ENCODE measurements at regions of chr2 and their contacts with region 1.

Region 1: DNA sequence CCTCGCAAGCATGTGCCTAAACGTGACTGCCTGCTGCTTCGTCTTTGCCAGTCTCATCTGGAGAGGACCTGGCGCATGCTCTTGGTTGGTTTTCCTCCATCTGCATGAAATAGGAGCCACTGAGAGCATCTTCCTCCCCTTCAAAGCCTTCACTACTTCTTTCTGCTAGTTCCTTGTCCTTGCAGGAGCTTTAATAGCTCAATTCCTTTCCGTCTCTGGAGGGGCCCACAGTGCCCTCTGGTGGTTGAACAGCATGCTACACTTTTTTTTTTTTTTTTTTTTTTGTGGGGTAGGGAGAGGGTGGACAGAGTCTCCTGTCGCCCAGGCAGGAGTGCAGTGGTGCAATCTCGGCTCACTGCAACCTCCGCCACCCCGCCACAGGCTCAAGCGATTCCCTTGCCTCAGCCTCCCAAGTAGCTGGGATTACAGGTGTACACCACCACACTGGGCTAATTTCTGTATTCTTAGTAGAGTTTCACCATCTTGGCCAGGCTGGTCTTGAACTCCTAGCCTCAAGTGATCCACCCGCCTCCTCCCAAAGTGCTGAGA is 59.6 kb downstream of the SP110 start:
- DNase-seq: peak; percentile 71
- H3K4me3 ChIP-seq: no peak overlapping the region
- H3K27ac ChIP-seq: no peak overlapping the region
- H3K4me1 ChIP-seq: no peaks in the 10 kb centered on the region
- H3K27me3 ChIP-seq: peaks cover 0 to 7% of the 10 kb centered on the region in 2 experiments
- CTCF ChIP-seq: peak; percentile 65 to 76
- POLR2A ChIP-seq: no peak

Region 2: GRCh38 chr2:229780856-229781773 is 379.1 kb before region 1 on chr2:
- CTCF ChIA-PET with region 1: interaction called, 29 read pairs
- POLR2A ChIA-PET with region 1: no interaction called
- dilution Hi-C with region 1: no loop called
- intact Hi-C with region 1: loop called (anchors 5 kb)
- DNase-seq: peak; percentile 76
- H3K4me3 ChIP-seq: no peak overlapping the region
- H3K27ac ChIP-seq: peak overlapping the region; percentile 31
- H3K4me1 ChIP-seq: peaks cover 13% of the 10 kb centered on the region
- H3K27me3 ChIP-seq: no peaks in the 10 kb centered on the region
- CTCF ChIP-seq: peak; percentile 74 to 75
- POLR2A ChIP-seq: no peak

Region 3: GRCh38 chr2:229861431-229861830 is 298.8 kb before region 1 on chr2:
- CTCF ChIA-PET with region 1: no interaction called
- POLR2A ChIA-PET with region 1: no interaction called
- dilution Hi-C with region 1: no loop called
- intact Hi-C with region 1: no loop called
- DNase-seq: no peak
- H3K4me3 ChIP-seq: no peak overlapping the region
- H3K27ac ChIP-seq: no peak overlapping the region
- H3K4me1 ChIP-seq: no peaks in the 10 kb centered on the region
- H3K27me3 ChIP-seq: no peaks in the 10 kb centered on the region
- CTCF ChIP-seq: no peak
- POLR2A ChIP-seq: no peak

Region 4: DNA sequence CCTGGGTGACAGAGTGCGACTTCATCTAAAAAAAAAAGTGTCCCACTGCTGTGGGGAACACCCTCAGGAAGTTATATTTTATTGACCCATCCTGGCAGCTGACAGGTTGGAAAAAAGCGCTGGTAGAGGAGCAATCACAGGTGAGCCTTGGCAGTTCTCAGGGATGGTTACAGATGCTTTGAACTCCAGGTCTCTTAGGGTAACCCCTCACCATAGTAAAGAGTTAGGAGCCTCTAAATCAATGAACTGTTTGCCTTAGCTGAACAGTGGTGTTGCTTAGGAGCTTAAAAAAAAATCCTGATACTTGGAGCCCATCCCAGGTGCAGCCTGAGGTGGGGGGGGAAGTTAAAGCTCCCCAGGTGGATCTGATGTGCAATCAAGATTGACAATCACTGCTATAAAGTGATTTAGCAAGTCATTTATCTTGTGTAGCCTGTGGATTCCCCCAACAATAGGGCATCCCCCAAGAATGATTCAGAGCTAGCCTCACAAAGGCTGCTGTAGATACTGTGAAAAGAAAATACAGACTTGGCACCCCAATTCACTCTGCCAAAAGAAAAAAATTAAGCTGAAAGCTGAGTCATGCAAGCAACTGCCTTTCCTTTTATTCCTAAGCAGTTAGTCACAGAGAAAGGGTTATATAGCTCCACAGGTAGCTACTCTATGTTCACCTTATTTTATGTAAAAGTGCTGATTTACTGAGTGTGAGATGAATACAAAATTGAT is 106.3 kb before region 1 on chr2:
- CTCF ChIA-PET with region 1: interaction called, 14 read pairs
- POLR2A ChIA-PET with region 1: no interaction called
- dilution Hi-C with region 1: no loop called
- intact Hi-C with region 1: no loop called
- DNase-seq: no peak
- H3K4me3 ChIP-seq: no peak overlapping the region
- H3K27ac ChIP-seq: no peak overlapping the region
- H3K4me1 ChIP-seq: no peaks in the 10 kb centered on the region
- H3K27me3 ChIP-seq: no peaks in the 10 kb centered on the region
- CTCF ChIP-seq: no peak
- POLR2A ChIP-seq: no peak

Region 5: GRCh38 chr2:230075988-230076631 is 84.1 kb before region 1 on chr2:
- CTCF ChIA-PET with region 1: interaction called, 11 read pairs
- POLR2A ChIA-PET with region 1: no interaction called
- dilution Hi-C with region 1: no loop called
- intact Hi-C with region 1: no loop called
- DNase-seq: peak; percentile 42
- H3K4me3 ChIP-seq: no peak overlapping the region
- H3K27ac ChIP-seq: no peak overlapping the region
- H3K4me1 ChIP-seq: peaks cover 5% of the 10 kb centered on the region
- H3K27me3 ChIP-seq: peaks cover 0 to 5% of the 10 kb centered on the region in 2 experiments
- CTCF ChIP-seq: no peak
- POLR2A ChIP-seq: no peak

Region 6: DNA sequence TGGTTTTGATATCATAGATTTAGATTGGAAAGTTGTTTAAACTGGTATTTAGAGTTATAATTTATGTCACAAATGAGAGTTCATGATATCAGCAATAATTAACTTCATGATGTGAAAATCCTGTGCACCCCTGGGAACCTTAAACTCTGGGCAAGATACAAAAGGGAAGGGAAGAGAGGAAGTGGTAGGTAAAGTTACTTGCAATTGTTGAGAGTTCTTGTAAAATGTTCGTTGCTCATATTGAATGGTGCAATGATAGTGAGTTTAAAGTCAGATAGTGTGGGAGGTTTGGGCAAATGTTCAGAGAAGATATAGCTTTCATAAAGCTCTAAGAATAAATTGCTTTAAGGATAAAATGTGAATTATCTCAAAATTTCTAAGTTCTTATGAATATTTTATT is 15.8 kb before region 1 on chr2:
- CTCF ChIA-PET with region 1: interaction called, 39 read pairs
- POLR2A ChIA-PET with region 1: no interaction called
- dilution Hi-C with region 1: no loop called
- intact Hi-C with region 1: no loop called
- DNase-seq: no peak
- H3K4me3 ChIP-seq: no peak overlapping the region
- H3K27ac ChIP-seq: no peak overlapping the region
- H3K4me1 ChIP-seq: no peaks in the 10 kb centered on the region
- H3K27me3 ChIP-seq: peaks cover 0 to 3% of the 10 kb centered on the region in 2 experiments
- CTCF ChIP-seq: no peak
- POLR2A ChIP-seq: no peak

Region 7: GRCh38 chr2:230306474-230306873 is 146.3 kb after region 1 on chr2:
- CTCF ChIA-PET with region 1: no interaction called
- POLR2A ChIA-PET with region 1: no interaction called
- dilution Hi-C with region 1: no loop called
- intact Hi-C with region 1: no loop called
- DNase-seq: no peak
- H3K4me3 ChIP-seq: no peak overlapping the region
- H3K27ac ChIP-seq: no peak overlapping the region
- H3K4me1 ChIP-seq: no peaks in the 10 kb centered on the region
- H3K27me3 ChIP-seq: no peaks in the 10 kb centered on the region
- CTCF ChIP-seq: no peak
- POLR2A ChIP-seq: no peak

Region 8: GRCh38 chr2:230614913-230615332 is 454.7 kb after region 1 on chr2:
- CTCF ChIA-PET with region 1: interaction called, 16 read pairs
- POLR2A ChIA-PET with region 1: no interaction called
- dilution Hi-C with region 1: no loop called
- intact Hi-C with region 1: loop called (anchors 1 kb)
- DNase-seq: no peak
- H3K4me3 ChIP-seq: no peak overlapping the region
- H3K27ac ChIP-seq: no peak overlapping the region
- H3K4me1 ChIP-seq: peaks cover 2% of the 10 kb centered on the region
- H3K27me3 ChIP-seq: peaks cover 0 to 3% of the 10 kb centered on the region in 2 experiments
- CTCF ChIP-seq: no peak
- POLR2A ChIP-seq: no peak

Measured in endothelial cell of umbilical vein (primary cell).